ENCODE measurements at regions of chr19 and their contacts with region 1.

Region 1: DNA sequence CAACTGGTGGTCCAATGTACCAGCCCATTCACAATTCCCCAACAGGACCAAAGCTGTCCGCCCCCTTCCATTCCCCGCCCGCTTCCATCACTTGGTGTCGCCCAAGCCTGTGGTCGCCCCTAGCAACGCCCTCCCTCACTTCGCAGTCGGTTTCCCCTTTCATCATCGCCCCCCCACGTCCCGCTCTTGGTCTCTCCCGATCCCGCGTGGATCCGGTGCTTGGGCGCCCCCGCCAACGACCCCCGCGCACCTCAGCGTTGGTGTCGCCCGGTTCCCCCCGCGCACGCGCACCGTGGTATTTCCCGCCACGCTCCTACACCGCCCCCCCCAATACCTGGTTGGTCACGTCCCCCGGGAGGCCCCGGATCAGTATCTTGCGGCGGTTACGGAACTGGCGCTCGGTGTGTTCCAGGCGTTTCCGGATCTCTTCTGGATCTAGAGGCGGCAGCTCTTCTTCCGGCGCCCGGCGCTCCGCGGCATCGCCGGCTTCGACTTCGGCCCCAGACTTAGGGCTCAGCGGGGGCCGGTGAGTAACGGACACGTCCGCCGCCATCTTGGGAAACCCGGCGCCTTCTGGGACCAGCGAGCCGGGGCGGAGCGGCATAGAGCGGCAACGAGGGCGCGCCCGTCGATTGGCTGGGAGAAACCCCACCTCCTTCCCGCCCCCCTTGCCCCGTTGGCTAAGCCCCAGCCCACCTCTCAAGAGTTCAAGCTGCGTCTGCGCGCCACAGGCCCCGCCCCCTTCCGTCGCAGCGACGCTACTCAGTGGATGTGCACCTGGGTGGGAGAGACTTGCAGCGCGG is at the start of gene RAVER1:
- DNase-seq: peak; percentile 99
- ATAC-seq: peak; percentile 94
- total RNA-seq, gene RAVER1: 12.3 TPM

Region 2: GRCh38 chr19:10289167-10289835 is 43.9 kb before region 1 on chr19:
- intact Hi-C with region 1: loop called (anchors 10 kb)
- DNase-seq: peak; percentile 52
- ATAC-seq: no peak

Region 3: GRCh38 chr19:10380313-10381102 is 47.4 kb after region 1 on chr19 and contains the start of gene TYK2:
- intact Hi-C with region 1: no loop called
- DNase-seq: peak; percentile 98
- ATAC-seq: peak; percentile 99
- total RNA-seq, gene TYK2: 56.0 TPM

Measured in left ventricle myocardium superior (tissue), 1 donor.